ENCODE measurements at regions of chr11 and their contacts with region 1.

Region 1: DNA sequence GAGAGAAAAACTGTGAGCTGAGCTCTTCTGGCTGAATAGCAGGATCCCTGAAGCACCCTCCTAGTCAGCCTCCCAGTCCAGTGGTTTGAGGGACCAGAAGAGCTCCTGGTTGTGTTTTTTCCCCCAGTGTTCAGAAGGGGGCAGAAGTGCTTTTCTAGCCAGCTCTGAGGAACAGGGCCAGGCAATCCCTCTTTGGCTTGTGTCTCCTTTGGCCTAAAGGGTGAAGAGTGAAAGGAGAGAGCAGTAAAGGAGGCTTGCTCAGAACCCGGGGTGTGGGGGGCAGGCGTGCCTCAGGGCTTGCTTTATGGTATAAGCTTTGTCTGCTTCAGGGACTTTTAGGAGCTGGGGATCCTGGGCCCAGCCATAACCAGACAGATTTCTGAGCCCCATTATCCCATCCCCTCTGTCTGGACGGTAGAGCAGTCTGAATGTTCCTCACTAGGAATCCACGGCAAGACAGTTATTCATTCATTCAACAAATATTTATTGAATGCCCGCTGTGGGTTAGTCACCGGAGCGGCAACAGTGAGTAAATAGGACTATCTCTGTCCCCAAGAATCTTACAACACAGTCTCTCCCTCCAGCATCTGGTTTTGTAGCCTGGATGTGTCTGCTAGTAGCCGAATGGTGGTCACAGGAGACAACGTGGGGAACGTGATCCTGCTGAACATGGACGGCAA is 14.5 kb downstream of the ACP2 start:
- DNase-seq: peak; percentile 67
- ATAC-seq: peak; percentile 83
- H3K4me3 ChIP-seq: no peak overlapping the region
- H3K27ac ChIP-seq: peak overlapping the region; percentile 51
- H3K4me1 ChIP-seq: peaks cover 14% of the 10 kb centered on the region
- H3K27me3 ChIP-seq: no peaks in the 10 kb centered on the region
- CTCF ChIP-seq: peak; percentile 50
- POLR2A ChIP-seq: no peak
- RAD21 ChIP-seq: peak; percentile 43

Region 2: DNA sequence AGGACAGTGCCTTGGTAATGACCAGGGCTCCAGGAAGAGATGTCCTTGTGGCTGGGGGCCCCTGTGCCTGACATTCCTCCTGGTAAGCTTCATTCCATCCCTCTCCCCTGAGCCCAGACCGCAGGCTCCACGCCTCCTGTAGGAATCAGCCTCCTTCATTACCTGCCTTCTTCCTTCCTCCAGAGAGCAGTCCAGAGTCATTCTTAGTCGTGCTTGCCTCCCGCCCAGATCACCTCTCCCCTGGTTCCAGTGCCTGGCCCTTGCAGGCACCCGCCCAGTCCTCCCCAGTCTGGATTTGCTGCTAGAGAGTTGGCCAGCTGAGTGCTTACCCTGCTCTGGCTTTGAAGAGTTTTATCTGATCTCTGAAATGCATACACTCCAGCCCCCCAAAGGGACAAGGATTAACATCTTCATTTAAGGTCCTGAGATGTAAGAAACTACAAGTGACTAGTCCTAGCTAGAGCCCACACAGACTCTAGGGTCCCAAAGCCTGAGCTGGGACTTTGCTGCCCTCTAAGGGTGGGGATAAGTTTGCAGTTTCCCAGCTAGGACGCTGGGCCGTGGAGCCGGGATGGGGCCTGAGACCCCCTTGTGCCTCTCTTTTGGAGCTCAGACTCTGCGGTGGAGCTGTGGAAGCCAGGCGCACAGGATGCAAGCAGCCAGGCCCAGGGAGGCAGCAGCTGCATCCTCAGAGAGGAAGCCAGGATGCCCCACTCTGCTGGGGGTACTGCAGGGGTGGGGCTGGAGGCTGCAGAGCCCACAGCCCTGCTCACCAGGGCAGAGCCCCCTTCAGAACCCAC is 25.2 kb after region 1 on chr11:
- CTCF ChIA-PET with region 1: interaction called, 12 read pairs
- POLR2A ChIA-PET with region 1: no interaction called
- dilution Hi-C with region 1: no loop called
- in situ Hi-C with region 1: no loop called
- intact Hi-C with region 1: no loop called
- DNase-seq: peak; percentile 30
- ATAC-seq: peak; percentile 55
- H3K4me3 ChIP-seq: no peak overlapping the region
- H3K27ac ChIP-seq: 0 out of 2 replicates have a peak overlapping the region, but pooled peaks have one; percentile 10
- H3K4me1 ChIP-seq: peaks cover 21% of the 10 kb centered on the region
- H3K27me3 ChIP-seq: no peaks in the 10 kb centered on the region
- CTCF ChIP-seq: peak; percentile 60
- POLR2A ChIP-seq: no peak
- RAD21 ChIP-seq: peak; percentile 68